CD4-positive, alpha-beta T cell (primary cell): ENCODE measurements at regions of chr5 and their contacts with region 1.

Region 1: DNA sequence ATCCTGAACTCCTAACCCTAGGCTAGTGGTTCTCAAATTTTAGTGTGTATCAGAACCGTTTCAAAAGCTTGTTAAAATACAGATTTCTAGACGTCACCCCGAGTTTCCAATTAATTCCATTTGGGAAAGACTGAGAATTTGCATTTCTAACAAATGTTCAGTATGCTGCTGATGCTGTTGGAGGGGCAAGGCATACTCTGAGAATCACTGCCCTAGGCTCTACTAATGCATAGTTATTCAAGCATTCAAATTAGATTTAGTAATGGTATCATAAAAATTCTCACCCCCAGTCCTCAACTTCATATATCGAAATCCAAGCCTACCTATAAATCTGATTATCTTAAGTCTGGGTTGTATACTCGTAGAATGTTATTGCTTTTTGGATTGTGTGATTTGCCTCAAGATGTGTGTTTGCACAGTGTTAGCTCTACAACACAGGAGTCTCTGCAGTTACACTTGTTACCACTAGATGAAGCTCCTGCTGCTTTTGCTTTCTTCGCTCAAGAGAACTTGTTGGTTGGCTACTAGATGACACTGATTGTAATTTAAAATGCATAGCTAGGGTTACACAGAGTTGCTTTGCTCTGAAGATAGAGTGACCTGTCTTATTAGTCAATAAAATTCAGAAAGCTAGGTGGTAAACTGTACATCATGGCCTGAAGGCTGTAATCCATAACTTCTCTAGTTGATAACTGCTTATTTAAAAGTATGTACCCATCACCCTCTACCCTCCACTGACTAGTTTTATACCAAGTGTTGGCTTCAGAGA is 7.5 kb upstream of the ERAP2 start:
- DNase-seq: peak in 6 of 14 experiments; percentile 18 to 81 (median 52)
- ATAC-seq: peak; percentile 99
- H3K4me3 ChIP-seq: no peak overlapping the region
- H3K4me3 Mint-ChIP-seq: no peak overlapping the region
- H3K27ac ChIP-seq: no peak overlapping the region
- H3K27ac Mint-ChIP-seq: peak overlapping the region; percentile 22
- H3K4me1 ChIP-seq: peaks cover 21% of the 10 kb centered on the region
- H3K4me1 Mint-ChIP-seq: peaks cover 45% of the 10 kb centered on the region
- H3K27me3 ChIP-seq: no peaks in the 10 kb centered on the region
- H3K27me3 Mint-ChIP-seq: no peaks in the 10 kb centered on the region
- CTCF ChIP-seq: peak; percentile 95

Region 2: GRCh38 chr5:96641368-96642228 is 227.2 kb before region 1 on chr5:
- CTCF ChIA-PET with region 1: no interaction called
- POLR2A ChIA-PET with region 1: no interaction called
- intact Hi-C with region 1: no loop called
- DNase-seq: no peak
- ATAC-seq: no peak
- H3K4me3 ChIP-seq: no peak overlapping the region
- H3K4me3 Mint-ChIP-seq: no peak overlapping the region
- H3K27ac ChIP-seq: no peak overlapping the region
- H3K27ac Mint-ChIP-seq: no peak overlapping the region
- H3K4me1 ChIP-seq: no peaks in the 10 kb centered on the region
- H3K4me1 Mint-ChIP-seq: no peaks in the 10 kb centered on the region
- H3K27me3 ChIP-seq: no peaks in the 10 kb centered on the region
- H3K27me3 Mint-ChIP-seq: no peaks in the 10 kb centered on the region
- CTCF ChIP-seq: no peak

Region 3: GRCh38 chr5:96816411-96816939 is 52.3 kb before region 1 on chr5:
- CTCF ChIA-PET with region 1: no interaction called
- POLR2A ChIA-PET with region 1: interaction called, 9 read pairs
- intact Hi-C with region 1: loop called in 1 of 2 experiments (anchors 5 kb)
- DNase-seq: peak; percentile 21 to 92 (median 46)
- ATAC-seq: peak; percentile 86
- H3K4me3 ChIP-seq: peak overlapping the region; percentile 43
- H3K4me3 Mint-ChIP-seq: peak overlapping the region; percentile 67
- H3K27ac ChIP-seq: peak overlapping the region; percentile 68 to 76
- H3K27ac Mint-ChIP-seq: peak overlapping the region; percentile 92
- H3K4me1 ChIP-seq: peaks cover 35% of the 10 kb centered on the region
- H3K4me1 Mint-ChIP-seq: peaks cover 71% of the 10 kb centered on the region
- H3K27me3 ChIP-seq: no peaks in the 10 kb centered on the region
- H3K27me3 Mint-ChIP-seq: no peaks in the 10 kb centered on the region
- CTCF ChIP-seq: no peak

Region 4: DNA sequence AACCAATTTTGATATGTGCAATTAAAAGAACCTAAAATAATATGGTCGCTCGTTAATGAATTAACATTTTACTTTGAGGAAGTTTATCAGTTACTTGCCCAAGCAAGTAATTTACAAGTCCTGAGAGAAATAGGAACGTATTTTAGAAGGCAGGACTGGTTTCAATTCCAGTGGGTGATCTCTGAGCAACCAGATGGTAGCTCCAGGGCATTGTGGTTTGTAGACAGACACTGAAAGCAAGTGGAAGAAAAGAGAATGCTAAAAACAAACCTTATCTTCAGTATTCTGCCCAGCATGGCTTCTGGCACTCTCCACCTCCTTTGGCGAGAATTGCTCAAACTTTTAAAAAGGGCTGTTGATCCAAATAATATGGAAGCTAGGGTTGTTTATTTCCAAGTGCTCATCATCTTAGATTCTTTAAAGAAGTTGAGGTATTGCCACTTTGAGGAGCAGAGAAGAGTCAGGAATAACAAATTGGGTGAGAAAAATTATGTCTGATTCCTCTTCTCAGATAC is 24.3 kb before region 1 on chr5:
- CTCF ChIA-PET with region 1: no interaction called
- POLR2A ChIA-PET with region 1: no interaction called
- intact Hi-C with region 1: no loop called
- DNase-seq: no peak
- ATAC-seq: no peak
- H3K4me3 ChIP-seq: no peak overlapping the region
- H3K4me3 Mint-ChIP-seq: no peak overlapping the region
- H3K27ac ChIP-seq: no peak overlapping the region
- H3K27ac Mint-ChIP-seq: no peak overlapping the region
- H3K4me1 ChIP-seq: no peaks in the 10 kb centered on the region
- H3K4me1 Mint-ChIP-seq: peaks cover 4% of the 10 kb centered on the region
- H3K27me3 ChIP-seq: no peaks in the 10 kb centered on the region
- H3K27me3 Mint-ChIP-seq: no peaks in the 10 kb centered on the region
- CTCF ChIP-seq: no peak

Region 5: GRCh38 chr5:96896806-96897205 is 28.0 kb after region 1 on chr5:
- CTCF ChIA-PET with region 1: interaction called, 12 read pairs
- POLR2A ChIA-PET with region 1: interaction called, 23 read pairs
- intact Hi-C with region 1: no loop called
- DNase-seq: peak in 3 of 14 experiments; percentile 41 to 52 (median 46)
- ATAC-seq: peak; percentile 32
- H3K4me3 ChIP-seq: peak overlapping the region; percentile 33
- H3K4me3 Mint-ChIP-seq: peak overlapping the region; percentile 83
- H3K27ac ChIP-seq: peak overlapping the region; percentile 78 to 79
- H3K27ac Mint-ChIP-seq: peak overlapping the region; percentile 91
- H3K4me1 ChIP-seq: peaks cover 8% of the 10 kb centered on the region
- H3K4me1 Mint-ChIP-seq: peaks cover 53% of the 10 kb centered on the region
- H3K27me3 ChIP-seq: no peaks in the 10 kb centered on the region
- H3K27me3 Mint-ChIP-seq: no peaks in the 10 kb centered on the region
- CTCF ChIP-seq: no peak

Region 6: DNA sequence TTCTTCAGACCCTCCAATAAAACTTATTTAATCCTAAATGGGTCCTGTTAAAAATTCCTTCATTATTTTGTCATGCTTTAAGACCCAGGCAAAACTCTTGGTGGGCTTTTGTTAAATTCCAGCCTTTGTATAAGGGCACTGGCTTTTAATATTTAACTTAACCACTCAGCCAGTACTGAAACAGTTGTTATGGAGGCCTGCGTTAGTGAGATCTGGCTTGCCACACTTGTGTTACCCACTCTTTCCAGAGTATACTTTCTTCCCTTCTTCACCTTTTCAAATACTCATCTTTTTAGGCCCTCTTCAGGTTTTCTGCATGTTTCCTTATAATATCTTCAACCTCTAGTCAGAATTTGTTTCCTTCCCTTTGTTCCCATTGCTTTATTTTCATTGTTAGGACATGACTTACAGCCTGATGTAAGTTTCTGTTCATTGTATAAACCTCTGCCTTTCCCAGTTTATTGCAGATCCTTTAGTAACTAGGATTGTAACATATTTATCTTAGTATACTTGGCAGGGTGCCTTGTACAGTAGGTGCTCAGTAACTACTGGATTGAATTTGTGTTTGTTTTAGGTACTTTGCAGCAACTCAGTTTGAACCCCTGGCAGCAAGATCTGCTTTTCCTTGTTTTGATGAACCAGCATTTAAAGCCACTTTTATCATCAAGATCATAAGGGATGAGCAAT is 115.9 kb after region 1 on chr5:
- CTCF ChIA-PET with region 1: interaction called, 5 read pairs
- POLR2A ChIA-PET with region 1: no interaction called
- intact Hi-C with region 1: loop called in 1 of 2 experiments (anchors 5 kb)
- DNase-seq: no peak
- ATAC-seq: no peak
- H3K4me3 ChIP-seq: no peak overlapping the region
- H3K4me3 Mint-ChIP-seq: no peak overlapping the region
- H3K27ac ChIP-seq: no peak overlapping the region
- H3K27ac Mint-ChIP-seq: no peak overlapping the region
- H3K4me1 ChIP-seq: peaks cover 3% of the 10 kb centered on the region
- H3K4me1 Mint-ChIP-seq: peaks cover 55% of the 10 kb centered on the region
- H3K27me3 ChIP-seq: no peaks in the 10 kb centered on the region
- H3K27me3 Mint-ChIP-seq: no peaks in the 10 kb centered on the region
- CTCF ChIP-seq: no peak

Region 7: DNA sequence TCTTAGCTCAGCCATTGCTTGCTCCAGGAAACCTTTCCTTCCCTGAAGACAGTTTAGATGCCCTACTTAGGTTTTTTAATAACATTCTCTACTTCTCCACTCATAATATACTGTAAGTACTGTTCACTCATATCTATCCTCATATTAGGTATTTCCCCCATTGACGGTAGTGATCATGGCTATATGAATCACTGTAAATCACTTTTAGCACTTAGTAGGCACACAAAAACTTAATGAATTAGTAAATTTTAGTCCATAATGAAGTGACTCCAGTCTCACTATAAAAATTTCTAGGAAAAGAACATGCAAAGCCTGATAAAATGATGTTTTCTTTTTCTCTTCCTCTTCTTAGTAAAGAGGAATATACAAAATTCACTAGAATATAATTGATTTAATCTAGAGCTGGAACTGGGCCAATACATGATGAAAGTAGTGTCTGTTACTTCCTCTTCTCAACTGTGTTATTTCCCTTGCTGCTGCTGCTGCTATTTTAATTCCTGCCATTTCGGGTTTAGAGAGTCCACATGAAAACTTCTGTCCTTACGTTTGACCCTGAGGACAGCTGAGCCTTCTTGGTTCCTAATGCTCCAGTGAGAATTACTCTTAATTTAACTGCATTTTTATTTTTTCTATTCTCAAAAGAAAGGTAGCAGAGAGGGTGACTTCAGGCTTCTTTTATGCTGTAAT is 140.6 kb after region 1 on chr5:
- CTCF ChIA-PET with region 1: interaction called, 5 read pairs
- POLR2A ChIA-PET with region 1: interaction called, 5 read pairs
- intact Hi-C with region 1: loop called in 1 of 2 experiments (anchors 2 kb)
- DNase-seq: peak in 4 of 14 experiments; percentile 17 to 71 (median 64)
- ATAC-seq: peak; percentile 63
- H3K4me3 ChIP-seq: no peak overlapping the region
- H3K4me3 Mint-ChIP-seq: peak overlapping the region; percentile 55
- H3K27ac ChIP-seq: no peak overlapping the region
- H3K27ac Mint-ChIP-seq: peak overlapping the region; percentile 67
- H3K4me1 ChIP-seq: peaks cover 4% of the 10 kb centered on the region
- H3K4me1 Mint-ChIP-seq: peaks cover 36% of the 10 kb centered on the region
- H3K27me3 ChIP-seq: no peaks in the 10 kb centered on the region
- H3K27me3 Mint-ChIP-seq: no peaks in the 10 kb centered on the region
- CTCF ChIP-seq: no peak

Region 8: DNA sequence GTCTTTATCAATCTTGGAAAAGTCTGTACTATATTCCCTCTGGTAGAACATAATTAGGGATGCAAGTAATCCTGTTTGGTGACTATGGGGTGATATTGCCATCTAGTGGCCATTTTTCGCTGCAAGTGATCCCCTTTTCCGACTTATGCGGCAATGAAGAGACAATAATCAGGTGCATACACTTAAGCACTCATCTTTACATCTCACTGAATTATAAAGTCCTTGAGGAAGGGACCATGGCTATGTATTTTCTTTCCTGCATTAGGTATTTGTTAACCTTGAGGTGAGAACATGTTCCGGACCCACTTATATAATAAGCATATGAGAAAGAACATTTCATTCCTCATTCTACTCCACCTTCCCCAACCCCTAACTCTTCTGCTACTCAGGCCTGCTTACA is 293.3 kb after region 1 on chr5:
- CTCF ChIA-PET with region 1: interaction called, 19 read pairs
- POLR2A ChIA-PET with region 1: interaction called, 13 read pairs
- intact Hi-C with region 1: loop called (anchors 1 kb)
- DNase-seq: peak in 12 of 14 experiments; percentile 16 to 82 (median 34)
- ATAC-seq: peak; percentile 49
- H3K4me3 ChIP-seq: no peak overlapping the region
- H3K4me3 Mint-ChIP-seq: no peak overlapping the region
- H3K27ac ChIP-seq: no peak overlapping the region
- H3K27ac Mint-ChIP-seq: no peak overlapping the region
- H3K4me1 ChIP-seq: no peaks in the 10 kb centered on the region
- H3K4me1 Mint-ChIP-seq: peaks cover 14% of the 10 kb centered on the region
- H3K27me3 ChIP-seq: no peaks in the 10 kb centered on the region
- H3K27me3 Mint-ChIP-seq: no peaks in the 10 kb centered on the region
- CTCF ChIP-seq: peak; percentile 98

Region 9: DNA sequence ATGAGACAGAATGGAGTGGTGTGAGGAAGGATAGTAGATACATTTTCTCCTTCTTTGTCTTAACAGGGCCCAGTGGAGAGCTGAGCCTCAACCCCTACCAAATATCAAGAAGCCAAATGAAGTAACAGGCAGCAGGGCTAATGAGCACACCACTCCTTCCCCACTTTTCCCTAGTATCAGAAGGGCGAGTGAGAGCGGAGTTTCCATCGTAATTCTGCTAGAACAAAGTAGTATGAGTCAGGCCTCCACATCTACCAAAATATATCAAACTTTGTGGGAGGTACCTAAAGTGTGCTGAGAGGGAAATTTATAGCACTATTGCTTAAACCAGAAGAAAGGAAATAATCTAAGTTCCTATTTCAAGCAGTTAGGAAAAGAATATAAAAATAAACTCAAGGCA is 1135.7 kb after region 1 on chr5:
- CTCF ChIA-PET with region 1: no interaction called
- POLR2A ChIA-PET with region 1: no interaction called
- intact Hi-C with region 1: no loop called
- DNase-seq: no peak
- ATAC-seq: no peak
- H3K4me3 ChIP-seq: no peak overlapping the region
- H3K4me3 Mint-ChIP-seq: no peak overlapping the region
- H3K27ac ChIP-seq: no peak overlapping the region
- H3K27ac Mint-ChIP-seq: no peak overlapping the region
- H3K4me1 ChIP-seq: no peaks in the 10 kb centered on the region
- H3K4me1 Mint-ChIP-seq: no peaks in the 10 kb centered on the region
- H3K27me3 ChIP-seq: no peaks in the 10 kb centered on the region
- H3K27me3 Mint-ChIP-seq: no peaks in the 10 kb centered on the region
- CTCF ChIP-seq: no peak

Region 10: GRCh38 chr5:98483301-98483685 is 1614.5 kb after region 1 on chr5:
- CTCF ChIA-PET with region 1: no interaction called
- POLR2A ChIA-PET with region 1: no interaction called
- intact Hi-C with region 1: no loop called
- DNase-seq: no peak
- ATAC-seq: no peak
- H3K4me3 ChIP-seq: no peak overlapping the region
- H3K4me3 Mint-ChIP-seq: no peak overlapping the region
- H3K27ac ChIP-seq: no peak overlapping the region
- H3K27ac Mint-ChIP-seq: no peak overlapping the region
- H3K4me1 ChIP-seq: no peaks in the 10 kb centered on the region
- H3K4me1 Mint-ChIP-seq: no peaks in the 10 kb centered on the region
- H3K27me3 ChIP-seq: no peaks in the 10 kb centered on the region
- H3K27me3 Mint-ChIP-seq: no peaks in the 10 kb centered on the region
- CTCF ChIP-seq: no peak